HCT116 (cell line): ENCODE measurements at regions of chr2 and their contacts with region 1.

Region 1: DNA sequence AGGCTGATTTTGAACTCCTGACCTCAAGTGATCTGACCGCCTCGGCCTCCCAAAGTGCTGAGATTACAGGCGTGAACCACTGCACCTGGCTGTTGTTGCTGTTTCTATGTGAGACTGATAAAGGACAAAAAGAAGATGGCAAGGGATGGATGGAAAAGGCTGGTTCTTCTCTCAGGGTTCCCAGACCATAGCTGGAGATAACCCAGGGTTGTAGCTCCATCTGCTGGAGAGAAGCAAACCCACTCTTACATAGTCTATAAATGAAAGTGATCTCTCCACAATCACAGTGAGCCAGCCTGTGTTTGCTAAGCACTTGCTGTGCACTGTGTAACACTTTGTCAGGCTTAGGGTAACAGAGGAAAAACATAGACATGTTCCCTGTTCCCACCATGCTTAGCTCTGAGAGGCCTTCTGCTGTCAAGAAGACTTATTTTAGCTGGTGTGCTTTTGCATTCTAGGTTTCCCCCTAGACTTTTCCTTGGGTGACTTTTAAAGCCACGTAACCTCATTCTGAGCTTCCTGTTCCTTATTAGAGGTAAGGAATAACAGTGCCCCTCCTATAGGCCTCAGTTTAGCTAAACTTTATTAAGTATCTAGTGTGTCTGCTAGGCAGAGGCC is 49.7 kb downstream of the LIMS1 start:
- DNase-seq: no peak
- ATAC-seq: peak; percentile 96
- H3K4me3 ChIP-seq: no peak overlapping the region
- H3K27ac ChIP-seq: no peak overlapping the region
- H3K4me1 ChIP-seq: peaks cover 0 to 16% of the 10 kb centered on the region in 2 experiments; a peak in 1 of 4 replicates
- H3K27me3 ChIP-seq: no peaks in the 10 kb centered on the region
- CTCF ChIP-seq: peak; percentile 70 to 79 (median 71); a peak in 5 of 6 replicates
- POLR2A ChIP-seq: no peak
- RAD21 ChIP-seq: peak; percentile 89

Region 2: DNA sequence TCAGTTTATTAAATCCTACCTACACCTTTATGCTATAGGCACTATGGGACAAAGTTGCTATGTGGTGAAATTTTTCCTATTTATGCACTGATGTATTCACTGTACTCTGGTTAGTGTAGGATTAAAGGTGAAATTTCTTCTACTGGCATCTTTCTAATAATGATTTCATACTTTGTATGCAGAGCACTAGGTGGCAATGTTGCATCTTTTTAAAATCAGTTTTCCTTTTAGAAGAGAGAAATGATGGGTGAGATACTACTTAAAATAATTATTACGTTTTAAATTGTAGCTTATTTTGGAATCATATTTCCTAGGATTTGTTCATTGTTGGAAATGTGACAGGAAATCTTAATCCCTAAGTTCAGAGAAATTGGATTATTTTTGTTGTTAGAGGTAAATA is 1946.0 kb before region 1 on chr2:
- CTCF ChIA-PET with region 1: no interaction called
- POLR2A ChIA-PET with region 1: no interaction called
- RAD21 ChIA-PET with region 1: no interaction called
- intact Hi-C with region 1: loop called (anchors 5 kb)
- DNase-seq: no peak
- ATAC-seq: no peak; the same call in 1 of the 2 replicates
- H3K4me3 ChIP-seq: no peak overlapping the region
- H3K27ac ChIP-seq: no peak overlapping the region
- H3K4me1 ChIP-seq: no peaks in the 10 kb centered on the region
- H3K27me3 ChIP-seq: 0 out of 2 replicates have a peak, but pooled peaks cover 5% of the 10 kb centered on the region
- CTCF ChIP-seq: peak; percentile 13 to 55 (median 15); a peak in 4 of 6 replicates
- POLR2A ChIP-seq: no peak
- RAD21 ChIP-seq: peak; percentile 44

Region 3: GRCh38 chr2:108215794-108216211 is 368.2 kb before region 1 on chr2:
- CTCF ChIA-PET with region 1: interaction called, 9 read pairs
- POLR2A ChIA-PET with region 1: no interaction called
- RAD21 ChIA-PET with region 1: interaction called in 1 of 2 experiments, 4 read pairs
- intact Hi-C with region 1: loop called (anchors 1 kb)
- DNase-seq: peak; percentile 35
- ATAC-seq: peak; percentile 90
- H3K4me3 ChIP-seq: peak overlapping the region in 1 of 2 experiments; percentile 33; a peak in 1 of 4 replicates
- H3K27ac ChIP-seq: no peak overlapping the region
- H3K4me1 ChIP-seq: peaks cover 0 to 8% of the 10 kb centered on the region in 2 experiments; a peak in 2 of 4 replicates
- H3K27me3 ChIP-seq: no peaks in the 10 kb centered on the region
- CTCF ChIP-seq: peak; percentile 37 to 59 (median 43); a peak in 5 of 6 replicates
- POLR2A ChIP-seq: no peak
- RAD21 ChIP-seq: peak; percentile 71

Region 4: GRCh38 chr2:108396845-108397244 is 187.2 kb before region 1 on chr2:
- CTCF ChIA-PET with region 1: interaction called, 11 read pairs
- POLR2A ChIA-PET with region 1: no interaction called
- RAD21 ChIA-PET with region 1: no interaction called
- intact Hi-C with region 1: loop called (anchors 1 kb)
- DNase-seq: peak; percentile 8
- ATAC-seq: peak; percentile 83
- H3K4me3 ChIP-seq: no peak overlapping the region
- H3K27ac ChIP-seq: no peak overlapping the region
- H3K4me1 ChIP-seq: no peaks in the 10 kb centered on the region
- H3K27me3 ChIP-seq: no peaks in the 10 kb centered on the region
- CTCF ChIP-seq: peak; percentile 19 to 46 (median 38); a peak in 4 of 6 replicates
- POLR2A ChIP-seq: no peak
- RAD21 ChIP-seq: peak; percentile 45; the same call in 1 of the 2 replicates

Region 5: DNA sequence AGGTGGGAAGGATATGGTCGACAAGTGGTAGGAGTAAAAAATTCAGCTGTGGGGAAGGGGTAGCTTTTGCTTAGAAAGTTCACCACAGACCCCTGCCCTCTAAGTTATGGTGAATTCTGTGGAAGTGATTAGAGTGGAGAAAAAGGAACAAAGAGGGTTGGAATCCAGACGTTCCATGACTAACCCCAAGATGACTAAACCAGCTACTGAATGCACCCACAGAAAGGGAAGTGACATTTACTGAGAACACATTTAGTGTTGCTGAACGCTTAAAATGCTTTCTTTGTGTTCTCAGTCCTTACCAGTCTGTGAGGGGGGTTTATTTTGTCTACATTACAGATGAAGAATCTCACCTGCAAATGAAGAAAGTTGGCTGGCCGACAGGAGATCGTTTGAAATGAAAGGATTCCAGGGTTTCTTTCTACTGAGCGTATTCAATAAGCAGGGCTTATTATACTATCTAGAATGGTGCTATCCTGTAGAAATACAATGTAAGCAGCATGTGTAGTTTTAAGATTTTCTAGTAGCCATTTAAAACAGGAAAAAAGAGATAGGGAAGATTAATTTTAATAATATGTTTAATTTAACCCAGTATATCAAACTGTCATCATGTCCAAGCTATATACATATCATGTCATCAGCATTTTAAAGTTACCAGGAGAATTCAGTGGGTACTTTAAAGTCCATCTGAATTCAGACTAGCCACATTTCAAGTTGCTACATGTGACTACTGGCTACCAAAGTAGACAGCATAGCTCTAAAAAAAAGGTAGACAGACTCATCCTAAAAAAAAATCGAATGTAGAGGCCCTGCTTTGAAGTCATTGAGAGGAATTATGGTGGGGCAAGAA is 10.3 kb after region 1 on chr2:
- CTCF ChIA-PET with region 1: interaction called, 11 read pairs
- POLR2A ChIA-PET with region 1: no interaction called
- RAD21 ChIA-PET with region 1: no interaction called
- intact Hi-C with region 1: no loop called
- DNase-seq: peak; percentile 62
- ATAC-seq: peak; percentile 65
- H3K4me3 ChIP-seq: peak overlapping the region in 1 of 2 experiments; percentile 42; a peak in 2 of 4 replicates
- H3K27ac ChIP-seq: peak overlapping the region; percentile 24; the same call in 1 of the 2 replicates
- H3K4me1 ChIP-seq: peaks cover 29 to 46% of the 10 kb centered on the region in 2 experiments
- H3K27me3 ChIP-seq: no peaks in the 10 kb centered on the region
- CTCF ChIP-seq: no peak
- POLR2A ChIP-seq: no peak
- RAD21 ChIP-seq: no peak

Region 6: DNA sequence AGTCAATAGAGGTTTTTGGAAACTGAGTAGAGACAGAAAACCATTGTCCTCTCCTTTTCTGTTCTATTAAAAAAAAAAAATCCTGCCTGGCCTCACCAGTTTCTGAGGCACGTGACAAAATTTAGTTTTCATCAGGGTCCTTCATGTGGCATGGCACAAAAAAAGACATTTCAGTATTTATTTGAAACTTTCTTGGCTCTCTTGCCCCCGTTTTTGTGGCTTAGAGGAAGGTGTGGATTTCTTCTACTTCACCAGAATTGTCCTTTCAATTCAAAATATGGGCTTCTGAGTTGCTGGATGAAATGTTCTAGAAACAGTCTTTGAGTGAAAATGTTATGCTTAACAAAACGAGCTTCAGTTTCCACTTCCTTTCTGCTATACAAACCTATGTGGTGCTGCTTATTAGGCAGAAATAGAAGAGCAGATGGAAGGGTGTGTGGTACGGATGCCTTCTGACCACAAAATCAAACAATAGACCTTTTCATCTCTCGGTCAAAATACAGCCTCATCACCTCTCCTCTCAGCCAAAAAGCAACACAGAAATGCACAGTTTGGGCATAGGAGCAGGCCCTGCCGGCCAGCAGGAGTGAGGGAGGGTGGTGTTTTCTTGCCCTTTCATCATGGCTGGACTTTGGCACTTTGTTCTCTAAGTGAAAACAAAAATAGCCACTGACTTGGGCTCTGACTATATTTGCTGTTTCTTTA is 634.2 kb after region 1 on chr2:
- CTCF ChIA-PET with region 1: no interaction called
- POLR2A ChIA-PET with region 1: no interaction called
- RAD21 ChIA-PET with region 1: no interaction called
- intact Hi-C with region 1: no loop called
- DNase-seq: no peak
- ATAC-seq: no peak
- H3K4me3 ChIP-seq: no peak overlapping the region
- H3K27ac ChIP-seq: no peak overlapping the region
- H3K4me1 ChIP-seq: peaks cover 8 to 10% of the 10 kb centered on the region in 2 experiments; a peak in 3 of 4 replicates
- H3K27me3 ChIP-seq: peaks cover 12% of the 10 kb centered on the region; the same call in 1 of the 2 replicates
- CTCF ChIP-seq: no peak
- POLR2A ChIP-seq: no peak
- RAD21 ChIP-seq: no peak